ENCODE measurements at regions of chr12 and their contacts with region 1.

Region 1: GRCh38 chr12:54359033-54359761 is 5.1 kb downstream of the GPR84 start:
- DNase-seq: peak; percentile 86 to 98
- ATAC-seq: peak; percentile 88 to 97 (median 96)
- H3K4me3 ChIP-seq: peak overlapping the region; percentile 90
- H3K4me3 Mint-ChIP-seq: no peak overlapping the region
- H3K27ac ChIP-seq: peak overlapping the region; percentile 79
- H3K27ac Mint-ChIP-seq: no peak overlapping the region
- H3K4me1 ChIP-seq: peaks cover 30% of the 10 kb centered on the region
- H3K4me1 Mint-ChIP-seq: peaks cover 4 to 8% of the 10 kb centered on the region in 2 donors
- H3K27me3 ChIP-seq: no peaks in the 10 kb centered on the region
- H3K27me3 Mint-ChIP-seq: peaks cover 0 to 3% of the 10 kb centered on the region in 2 donors
- CTCF ChIP-seq: no peak

Region 2: DNA sequence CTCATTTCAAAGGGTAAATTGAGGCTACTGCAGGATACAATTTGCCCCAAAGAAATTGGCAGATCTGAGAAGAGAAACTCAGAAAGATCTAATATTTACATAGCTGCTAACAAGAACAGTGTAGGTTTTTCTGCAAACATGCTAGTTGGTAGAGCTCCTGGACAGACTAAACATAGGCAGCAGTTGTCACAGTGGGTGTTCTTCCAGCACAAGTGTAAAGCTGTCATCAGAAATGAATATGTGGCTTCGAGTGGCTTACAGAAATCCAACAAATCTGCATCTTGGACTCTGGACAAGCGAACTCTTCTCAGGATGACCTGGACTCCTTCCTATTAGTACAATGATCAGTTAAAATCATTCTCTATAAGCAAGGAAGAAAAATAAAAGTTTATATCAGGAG is 85.2 kb before region 1 on chr12:
- intact Hi-C with region 1: no loop called
- DNase-seq: no peak
- ATAC-seq: no peak
- H3K4me3 ChIP-seq: no peak overlapping the region
- H3K4me3 Mint-ChIP-seq: no peak overlapping the region
- H3K27ac ChIP-seq: no peak overlapping the region
- H3K27ac Mint-ChIP-seq: no peak overlapping the region
- H3K4me1 ChIP-seq: peaks cover 4% of the 10 kb centered on the region
- H3K4me1 Mint-ChIP-seq: peaks cover 0 to 7% of the 10 kb centered on the region in 2 donors
- H3K27me3 ChIP-seq: no peaks in the 10 kb centered on the region
- H3K27me3 Mint-ChIP-seq: no peaks in the 10 kb centered on the region
- CTCF ChIP-seq: no peak

Region 3: DNA sequence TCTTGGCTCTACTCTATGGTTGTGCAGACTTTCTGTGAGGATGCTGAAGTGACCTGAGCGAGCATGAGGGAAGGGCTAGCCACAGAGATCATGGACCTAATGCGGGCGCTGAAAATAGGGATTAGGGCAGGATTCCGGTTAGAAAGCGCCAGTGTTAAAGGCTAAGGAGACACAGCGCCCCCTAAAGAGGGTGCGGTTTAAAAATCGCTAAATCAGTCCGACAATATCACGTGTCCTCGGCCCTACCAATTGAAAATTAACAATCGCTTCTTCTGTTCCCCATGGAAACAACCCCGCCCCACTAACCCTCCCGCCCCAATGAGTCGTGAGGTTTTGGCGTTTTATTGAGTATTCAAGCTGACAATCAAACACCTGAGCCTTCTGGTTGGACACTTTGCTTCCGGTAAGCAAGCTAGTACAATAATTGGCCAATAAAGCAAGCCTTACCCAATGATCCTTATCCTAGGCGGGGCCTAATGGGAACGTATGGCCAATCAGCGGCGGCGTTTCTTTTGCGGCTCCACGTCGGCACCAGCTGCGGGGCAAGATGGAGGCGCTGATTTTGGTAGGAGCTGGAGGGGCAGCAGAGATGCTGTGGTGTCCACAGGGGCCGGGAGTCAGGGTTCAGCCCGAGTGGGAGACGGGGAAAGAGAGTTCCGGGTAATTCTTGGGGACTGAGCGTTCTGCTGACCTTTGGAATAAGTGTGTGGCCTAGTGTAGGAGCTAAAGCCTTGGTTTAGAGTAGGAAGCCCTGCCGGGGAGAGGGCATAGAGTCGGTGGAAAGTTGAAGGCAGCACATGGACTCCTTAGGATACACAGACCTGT is 34.4 kb before region 1 on chr12 and contains the start of gene COPZ1:
- intact Hi-C with region 1: loop called (anchors 1 kb)
- DNase-seq: peak; percentile 89 to 97
- ATAC-seq: peak; percentile 93 to 98 (median 93)
- H3K4me3 ChIP-seq: peak within 1 kb of the TSS; percentile 65
- H3K4me3 Mint-ChIP-seq: peak within 1 kb of the TSS; percentile 100
- H3K27ac ChIP-seq: peak within 1 kb of the TSS; percentile 77
- H3K27ac Mint-ChIP-seq: peak within 1 kb of the TSS; percentile 99
- H3K4me1 ChIP-seq: peaks cover 15% of the 10 kb centered on the region
- H3K4me1 Mint-ChIP-seq: peaks cover 21 to 42% of the 10 kb centered on the region in 2 donors
- H3K27me3 ChIP-seq: no peaks in the 10 kb centered on the region
- H3K27me3 Mint-ChIP-seq: no peaks in the 10 kb centered on the region
- CTCF ChIP-seq: peak; percentile 90
- total RNA-seq, gene COPZ1: 66.3 to 83.6 (median 79.7) TPM

Measured in natural killer cell (primary cell).